Left cardiac atrium (tissue), 4 donors: ENCODE measurements at regions of chr9 and their contacts with region 1.

Region 1: GRCh38 chr9:97501177-97501971 is at the start of gene TMOD1:
- DNase-seq: peak; percentile 83
- ATAC-seq: peak; percentile 79 to 87
- total RNA-seq, gene TMOD1: 142 to 149 TPM

Region 2: GRCh38 chr9:97536480-97536879 is 35.1 kb after region 1 on chr9:
- intact Hi-C with region 1: loop called in 1 of 2 experiments (anchors 5 kb)
- DNase-seq: no peak
- ATAC-seq: no peak

Region 3: DNA sequence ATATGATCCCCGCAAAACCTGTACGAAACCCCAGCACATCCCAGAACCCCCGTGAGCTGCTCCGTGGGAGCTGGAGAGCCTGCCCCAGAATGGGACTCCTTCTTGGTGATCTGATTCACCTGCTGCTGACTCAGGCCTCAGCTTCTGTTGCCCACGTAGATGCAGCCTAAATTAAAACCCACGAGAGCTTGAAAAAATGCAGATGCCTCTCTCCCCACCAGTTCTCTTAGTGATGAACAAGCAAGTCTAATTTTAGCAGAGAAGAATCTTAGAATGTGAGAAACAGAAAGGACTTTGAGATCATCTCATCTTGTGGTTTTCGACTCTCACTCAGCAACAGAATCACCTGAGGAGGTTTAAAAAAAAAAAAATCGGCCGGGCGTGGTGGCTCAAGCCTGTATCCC is 57.7 kb after region 1 on chr9:
- intact Hi-C with region 1: loop called in 1 of 2 experiments (anchors 5 kb)
- DNase-seq: no peak
- ATAC-seq: peak in 1 of 2 donors; percentile 2